GM12878 (cell line): ENCODE measurements at regions of chr15 and their contacts with region 1.

Region 1: DNA sequence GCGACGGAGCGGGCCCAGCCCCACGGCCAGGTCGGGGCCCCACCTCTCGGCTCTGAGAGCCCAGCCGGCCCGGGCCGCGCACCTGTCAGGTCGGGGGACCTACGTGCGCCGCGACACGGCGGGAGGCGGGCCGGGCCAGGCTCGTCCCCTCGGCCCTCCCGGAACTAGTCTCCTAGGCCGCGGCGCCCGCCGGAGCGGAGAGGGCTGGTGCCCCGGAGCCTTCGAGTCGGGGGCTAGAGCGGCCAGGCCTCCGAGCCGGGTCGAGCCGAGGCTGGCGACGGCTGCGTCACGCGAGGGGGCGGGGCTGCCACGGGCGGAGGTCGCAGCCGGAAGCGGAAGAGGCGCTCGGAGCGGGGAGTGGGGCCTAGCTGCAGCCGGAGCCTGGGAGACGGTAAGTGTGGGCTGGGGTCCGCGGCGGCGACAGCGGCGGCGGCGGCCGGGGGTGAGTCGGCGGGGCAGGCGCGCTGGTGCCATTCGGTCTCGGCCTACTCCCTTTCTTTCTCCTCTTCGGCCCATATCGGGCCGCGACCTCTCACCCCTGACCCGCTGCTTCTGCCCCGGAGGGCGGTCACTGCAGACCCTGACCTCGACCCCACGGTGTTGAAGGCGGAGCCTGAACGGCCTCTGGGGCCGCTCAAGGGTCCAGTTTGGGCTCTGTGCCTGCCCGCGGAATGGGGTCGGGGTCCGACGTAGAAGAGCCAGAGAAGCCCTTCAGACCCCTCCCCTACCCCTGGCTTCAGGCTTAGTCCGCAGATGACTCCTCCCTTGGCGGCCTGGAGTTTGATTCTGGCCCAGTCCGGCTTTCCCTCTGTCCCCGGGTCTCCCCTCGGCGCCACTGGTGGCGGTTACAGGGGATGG is at the start of gene CLK3:
- DNase-seq: peak; percentile 79
- ATAC-seq: peak; percentile 89
- H3K4me3 ChIP-seq: peak within 1 kb of the TSS; percentile 89
- H3K27ac ChIP-seq: peak within 1 kb of the TSS; percentile 97
- H3K4me1 ChIP-seq: peaks cover 17% of the 10 kb centered on the region
- H3K27me3 ChIP-seq: no peaks in the 10 kb centered on the region; a peak in 1 of 4 replicates
- CTCF ChIP-seq: no peak
- EP300 ChIP-seq: peak in 1 of 2 experiments; percentile 11; a peak in 1 of 4 replicates
- POLR2A ChIP-seq: peak; percentile 75
- RAD21 ChIP-seq: no peak
- polyA plus RNA-seq, gene CLK3: 3.3 to 5.8 TPM

Region 2: DNA sequence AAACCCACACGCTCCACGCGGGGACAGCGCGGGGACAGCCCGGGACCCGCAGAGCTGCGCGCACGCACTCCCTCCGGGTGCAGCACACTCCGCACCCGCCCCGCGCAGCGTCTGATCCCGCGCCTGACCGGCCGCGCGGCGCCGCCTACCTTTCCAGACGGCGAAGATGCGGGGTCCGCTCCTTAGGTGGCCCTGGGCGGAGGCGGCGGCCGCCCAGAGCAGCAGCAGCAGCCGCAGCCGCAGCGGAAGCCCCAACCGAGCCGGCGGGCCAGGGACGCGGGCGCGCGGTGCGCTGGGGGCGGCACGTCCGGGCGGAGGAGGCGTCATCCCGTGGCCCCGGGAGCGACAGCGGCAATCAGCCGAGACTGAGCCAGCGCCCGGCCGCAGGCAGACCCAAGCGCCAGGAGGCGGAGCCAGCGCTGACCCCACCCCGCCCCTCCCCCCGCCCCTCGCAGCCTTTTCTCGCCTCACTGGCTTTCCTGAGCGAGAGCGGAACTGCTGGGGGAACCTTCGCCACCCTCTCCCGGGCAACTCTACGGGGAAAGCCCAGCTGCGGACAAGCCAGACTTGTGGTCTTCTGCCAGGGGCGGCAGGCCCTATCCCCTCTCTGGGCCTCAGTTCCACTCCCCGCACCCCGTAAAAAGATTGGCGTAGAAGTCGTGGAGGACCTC is 182.0 kb before region 1 on chr15 and contains the start of gene SEMA7A:
- CTCF ChIA-PET with region 1: no interaction called
- POLR2A ChIA-PET with region 1: no interaction called
- RAD21 ChIA-PET with region 1: interaction called, 3 read pairs
- SMC1A ChIA-PET with region 1: no interaction called
- in situ Hi-C with region 1: no loop called
- intact Hi-C with region 1: loop called (anchors 5 kb)
- DNase-seq: peak; percentile 57
- ATAC-seq: peak; percentile 81
- H3K4me3 ChIP-seq: peak within 1 kb of the TSS; percentile 98
- H3K27ac ChIP-seq: peak within 1 kb of the TSS; percentile 87
- H3K4me1 ChIP-seq: peaks cover 32% of the 10 kb centered on the region
- H3K27me3 ChIP-seq: no peaks in the 10 kb centered on the region
- CTCF ChIP-seq: no peak
- EP300 ChIP-seq: peak in 1 of 2 experiments; percentile 25; a peak in 2 of 4 replicates
- POLR2A ChIP-seq: peak; percentile 98
- RAD21 ChIP-seq: no peak
- polyA plus RNA-seq, gene SEMA7A: 0.08 to 1.1 TPM

Region 3: DNA sequence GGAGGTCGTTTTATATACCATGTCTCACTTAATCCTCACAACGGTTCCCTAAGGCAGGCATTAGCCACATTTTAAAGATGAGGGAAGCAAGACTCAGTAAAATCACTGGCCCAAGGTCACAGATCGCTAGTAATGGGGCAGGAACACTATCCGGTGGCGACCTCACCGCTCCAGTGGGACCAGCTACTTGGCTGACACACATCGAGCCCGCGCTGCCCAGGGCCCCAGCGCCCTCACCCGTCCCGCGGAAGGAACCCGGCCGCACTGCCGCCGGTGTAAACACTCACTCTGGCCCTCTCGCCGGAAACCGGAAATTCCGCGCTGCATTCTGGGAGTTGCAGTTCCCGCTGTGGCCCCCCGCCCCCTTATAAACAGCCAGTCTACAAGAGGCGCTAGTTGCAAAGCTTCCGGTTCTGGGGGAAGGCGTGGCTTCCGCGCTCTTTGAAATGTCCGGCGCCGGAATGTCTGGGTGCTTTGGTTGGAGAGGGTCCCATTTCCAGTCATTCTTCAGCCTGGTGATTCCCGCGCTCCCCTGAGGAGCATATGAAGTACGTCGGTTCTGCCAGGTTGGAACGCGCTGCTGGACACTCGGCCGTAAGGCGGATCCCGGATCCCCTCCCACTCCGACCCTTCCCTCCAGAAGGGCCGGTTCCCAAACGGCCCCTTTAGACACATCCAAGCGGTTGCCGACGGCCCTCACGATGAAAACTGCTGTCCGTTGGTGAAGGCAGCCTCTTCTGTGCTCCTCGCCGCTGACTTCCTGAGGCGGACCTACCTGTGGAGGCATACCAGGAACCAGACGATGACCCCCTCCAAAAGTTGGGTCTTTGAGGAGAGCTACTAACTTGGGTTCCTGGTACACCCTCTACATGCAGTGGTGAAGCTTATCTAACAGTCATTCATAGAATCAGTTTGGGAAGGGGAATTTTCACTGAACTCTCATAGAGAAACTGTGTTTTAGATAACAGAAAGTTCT is 154.6 kb before region 1 on chr15 and contains the start of gene UBL7:
- CTCF ChIA-PET with region 1: interaction called, 4 read pairs
- POLR2A ChIA-PET with region 1: interaction called, 12 read pairs
- RAD21 ChIA-PET with region 1: interaction called, 4 read pairs
- SMC1A ChIA-PET with region 1: no interaction called
- in situ Hi-C with region 1: no loop called
- intact Hi-C with region 1: loop called (anchors 1 kb)
- DNase-seq: peak; percentile 77
- ATAC-seq: peak; percentile 92
- H3K4me3 ChIP-seq: peak within 1 kb of the TSS; percentile 92
- H3K27ac ChIP-seq: peak within 1 kb of the TSS; percentile 93
- H3K4me1 ChIP-seq: peaks cover 11% of the 10 kb centered on the region
- H3K27me3 ChIP-seq: no peaks in the 10 kb centered on the region
- CTCF ChIP-seq: peak in 2 of 3 experiments; percentile 7 to 48; a peak in 3 of 6 replicates
- EP300 ChIP-seq: no peak
- POLR2A ChIP-seq: peak; percentile 98
- RAD21 ChIP-seq: no peak
- polyA plus RNA-seq, gene UBL7: 25.9 to 59.1 TPM

Region 4: GRCh38 chr15:74545880-74546656 is 69.7 kb before region 1 on chr15:
- CTCF ChIA-PET with region 1: interaction called, 5 read pairs
- POLR2A ChIA-PET with region 1: interaction called, 30 read pairs
- RAD21 ChIA-PET with region 1: interaction called, 9 read pairs
- SMC1A ChIA-PET with region 1: interaction called, 10 read pairs
- in situ Hi-C with region 1: no loop called
- intact Hi-C with region 1: loop called (anchors 5 kb)
- DNase-seq: peak; percentile 77
- ATAC-seq: peak; percentile 58
- H3K4me3 ChIP-seq: peak overlapping the region; percentile 48
- H3K27ac ChIP-seq: peak overlapping the region; percentile 72
- H3K4me1 ChIP-seq: peaks cover 16% of the 10 kb centered on the region
- H3K27me3 ChIP-seq: no peaks in the 10 kb centered on the region
- CTCF ChIP-seq: no peak
- EP300 ChIP-seq: peak in 1 of 2 experiments; percentile 79; a peak in 2 of 4 replicates
- POLR2A ChIP-seq: no peak; the same call in 1 of the 2 replicates
- RAD21 ChIP-seq: no peak

Region 5: DNA sequence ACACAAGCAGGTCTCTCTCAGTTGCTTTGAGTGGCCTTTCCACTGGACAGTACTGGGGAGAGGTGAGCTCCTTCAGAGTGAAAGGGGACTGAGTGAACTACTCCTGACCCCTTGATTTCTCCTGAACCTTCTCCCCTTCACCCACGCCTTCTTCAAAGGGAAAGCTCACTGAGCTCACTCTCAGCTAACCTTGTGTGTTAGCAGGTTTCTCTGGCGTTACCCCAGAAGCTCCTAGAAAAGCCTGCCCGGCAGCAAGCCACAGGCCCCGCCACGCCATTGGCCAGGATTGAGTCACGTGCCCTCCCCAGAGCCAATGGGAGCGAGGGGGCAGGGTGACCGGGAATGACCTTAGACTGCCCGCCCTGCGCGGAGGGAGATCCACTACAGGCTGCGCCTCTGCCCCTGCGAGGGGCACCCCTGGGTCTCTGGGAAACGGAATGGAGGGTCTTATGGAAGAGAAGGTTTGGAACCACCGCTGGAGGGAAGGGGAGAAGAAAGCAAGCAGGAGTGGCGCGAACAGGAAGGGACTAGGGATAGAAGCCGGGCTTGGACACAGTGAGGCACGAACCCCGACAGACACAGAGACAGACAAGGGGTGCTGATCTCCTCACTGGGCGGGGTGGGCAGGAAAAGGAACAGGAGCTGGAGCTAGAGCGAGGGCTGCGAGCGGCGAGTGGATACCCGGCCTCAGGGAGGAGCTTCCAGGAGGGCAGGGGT is 17.5 kb before region 1 on chr15:
- CTCF ChIA-PET with region 1: interaction called, 5 read pairs
- POLR2A ChIA-PET with region 1: interaction called, 17 read pairs
- RAD21 ChIA-PET with region 1: interaction called, 7 read pairs
- SMC1A ChIA-PET with region 1: interaction called, 5 read pairs
- in situ Hi-C with region 1: no loop called
- intact Hi-C with region 1: no loop called
- DNase-seq: peak; percentile 69
- ATAC-seq: peak; percentile 99
- H3K4me3 ChIP-seq: peak overlapping the region; percentile 74
- H3K27ac ChIP-seq: peak overlapping the region; percentile 73
- H3K4me1 ChIP-seq: peaks cover 12% of the 10 kb centered on the region; the same call in 1 of the 2 replicates
- H3K27me3 ChIP-seq: no peaks in the 10 kb centered on the region
- CTCF ChIP-seq: no peak
- EP300 ChIP-seq: no peak
- POLR2A ChIP-seq: peak; percentile 95
- RAD21 ChIP-seq: no peak